ENCODE measurements at regions of chr2 and their contacts with region 1.

Region 1: GRCh38 chr2:138421315-138422301 is 80.0 kb upstream of the SPOPL start:
- DNase-seq: peak; percentile 80
- H3K4me3 Mint-ChIP-seq: peak overlapping the region; percentile 41
- H3K27ac Mint-ChIP-seq: peak overlapping the region; percentile 43
- H3K4me1 Mint-ChIP-seq: peaks cover 19% of the 10 kb centered on the region
- H3K27me3 Mint-ChIP-seq: no peaks in the 10 kb centered on the region
- CTCF ChIP-seq: no peak

Region 2: GRCh38 chr2:138432971-138433370 is 11.4 kb after region 1 on chr2:
- CTCF ChIA-PET with region 1: interaction called, 4 read pairs
- POLR2A ChIA-PET with region 1: interaction called, 10 read pairs
- intact Hi-C with region 1: no loop called
- DNase-seq: peak; percentile 30
- H3K4me3 Mint-ChIP-seq: no peak overlapping the region
- H3K27ac Mint-ChIP-seq: no peak overlapping the region
- H3K4me1 Mint-ChIP-seq: peaks cover 14% of the 10 kb centered on the region
- H3K27me3 Mint-ChIP-seq: no peaks in the 10 kb centered on the region
- CTCF ChIP-seq: no peak

Measured in MCF 10A (cell line).